B cell (primary cell): ENCODE measurements at regions of chr1 and their contacts with region 1.

Region 1: GRCh38 chr1:37989361-37989930 is 376 bp downstream of the SF3A3 start:
- DNase-seq: no peak
- ATAC-seq: no peak
- H3K4me3 ChIP-seq: peak overlapping the region; percentile 90 to 98 (median 96)
- H3K4me3 Mint-ChIP-seq: peak overlapping the region; percentile 99
- H3K27ac ChIP-seq: peak overlapping the region; percentile 53 to 85
- H3K27ac Mint-ChIP-seq: peak overlapping the region; percentile 98
- H3K4me1 ChIP-seq: peaks cover 7 to 15% of the 10 kb centered on the region in 2 donors
- H3K4me1 Mint-ChIP-seq: peaks cover 20% of the 10 kb centered on the region
- H3K27me3 ChIP-seq: no peaks in the 10 kb centered on the region
- H3K27me3 Mint-ChIP-seq: no peaks in the 10 kb centered on the region
- CTCF ChIP-seq: no peak

Region 2: GRCh38 chr1:37859507-37860345 is 129.7 kb before region 1 on chr1 and contains the start of gene MTF1:
- CTCF ChIA-PET with region 1: interaction called, 5 read pairs
- POLR2A ChIA-PET with region 1: no interaction called
- intact Hi-C with region 1: loop called (anchors 1 kb)
- DNase-seq: peak; percentile 98
- ATAC-seq: peak; percentile 98
- H3K4me3 ChIP-seq: peak within 1 kb of the TSS; percentile 72 to 100 (median 95)
- H3K4me3 Mint-ChIP-seq: peak within 1 kb of the TSS; percentile 97
- H3K27ac ChIP-seq: peak within 1 kb of the TSS; percentile 79 to 95
- H3K27ac Mint-ChIP-seq: peak within 1 kb of the TSS; percentile 94
- H3K4me1 ChIP-seq: peaks cover 16 to 18% of the 10 kb centered on the region in 2 donors
- H3K4me1 Mint-ChIP-seq: peaks cover 33% of the 10 kb centered on the region
- H3K27me3 ChIP-seq: no peaks in the 10 kb centered on the region
- H3K27me3 Mint-ChIP-seq: no peaks in the 10 kb centered on the region
- CTCF ChIP-seq: peak; percentile 94
- total RNA-seq, gene MTF1: 34.6 and 36.7 TPM in 2 replicates

Region 3: DNA sequence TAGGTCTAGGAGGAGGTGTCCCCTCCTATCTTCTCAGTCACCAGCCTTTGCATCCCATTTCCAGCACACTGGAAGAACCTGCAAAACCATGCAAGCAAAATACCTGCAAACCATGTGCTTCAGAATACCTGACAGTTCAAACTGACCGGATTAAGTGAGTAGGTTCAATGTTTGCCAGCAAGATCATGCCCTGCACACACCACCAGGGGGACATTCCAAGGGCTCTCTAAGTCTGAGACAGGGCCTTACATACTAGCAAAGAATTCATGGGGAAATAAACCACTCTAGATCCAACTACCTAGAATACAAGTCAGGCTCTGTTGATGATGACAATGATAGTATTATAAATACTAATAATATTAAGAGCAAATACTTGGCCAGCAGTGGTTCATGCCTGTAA is 70.2 kb before region 1 on chr1:
- CTCF ChIA-PET with region 1: interaction called, 5 read pairs
- POLR2A ChIA-PET with region 1: no interaction called
- intact Hi-C with region 1: loop called (anchors 2 kb)
- DNase-seq: peak; percentile 23
- ATAC-seq: no peak
- H3K4me3 ChIP-seq: no peak overlapping the region
- H3K4me3 Mint-ChIP-seq: no peak overlapping the region
- H3K27ac ChIP-seq: no peak overlapping the region
- H3K27ac Mint-ChIP-seq: no peak overlapping the region
- H3K4me1 ChIP-seq: peaks cover 55 to 56% of the 10 kb centered on the region in 2 donors
- H3K4me1 Mint-ChIP-seq: peaks cover 45% of the 10 kb centered on the region
- H3K27me3 ChIP-seq: no peaks in the 10 kb centered on the region
- H3K27me3 Mint-ChIP-seq: no peaks in the 10 kb centered on the region
- CTCF ChIP-seq: peak; percentile 53

Region 4: DNA sequence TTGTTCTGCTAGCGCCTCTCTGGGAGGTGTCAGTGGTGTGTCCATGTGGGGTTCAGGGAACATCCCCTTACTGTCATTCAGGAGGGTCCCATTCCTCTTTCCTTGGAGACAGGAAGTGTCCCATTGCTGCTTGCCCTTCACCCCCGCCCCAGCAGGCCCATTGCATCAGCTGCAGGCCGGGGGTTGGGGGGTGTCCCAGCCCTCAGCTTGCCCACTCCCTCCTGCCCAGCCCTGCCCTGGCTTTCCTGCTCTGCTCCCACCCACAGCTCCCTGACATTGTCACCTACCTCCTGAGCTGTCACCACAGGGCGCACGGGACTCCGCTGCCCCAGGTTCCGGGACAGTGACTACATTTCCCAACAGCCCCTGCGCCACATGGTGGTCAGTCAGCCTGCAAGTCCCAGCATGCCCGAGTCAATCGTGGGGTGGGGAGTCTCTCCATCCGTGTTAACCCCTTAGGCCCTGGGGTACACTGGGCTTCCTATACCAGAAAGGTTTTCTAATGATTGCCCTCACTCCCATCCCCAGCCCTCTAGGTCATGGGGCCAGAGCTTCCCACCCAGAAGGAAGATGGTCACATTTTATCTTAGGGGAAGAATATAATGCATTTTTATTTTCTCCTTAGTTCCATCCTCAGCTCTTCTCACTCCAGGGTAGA is 42.6 kb before region 1 on chr1 and contains the start of gene INPP5B:
- CTCF ChIA-PET with region 1: no interaction called
- POLR2A ChIA-PET with region 1: no interaction called
- intact Hi-C with region 1: loop called (anchors 1 kb)
- DNase-seq: peak; percentile 79
- ATAC-seq: peak; percentile 100
- H3K4me3 ChIP-seq: peak within 1 kb of the TSS; percentile 50 to 73 (median 67)
- H3K4me3 Mint-ChIP-seq: peak within 1 kb of the TSS; percentile 91
- H3K27ac ChIP-seq: peak within 1 kb of the TSS in 1 of 2 donors; percentile 56
- H3K27ac Mint-ChIP-seq: peak within 1 kb of the TSS; percentile 86
- H3K4me1 ChIP-seq: peaks cover 14 to 19% of the 10 kb centered on the region in 2 donors
- H3K4me1 Mint-ChIP-seq: peaks cover 14% of the 10 kb centered on the region
- H3K27me3 ChIP-seq: no peaks in the 10 kb centered on the region
- H3K27me3 Mint-ChIP-seq: no peaks in the 10 kb centered on the region
- CTCF ChIP-seq: no peak
- total RNA-seq, gene INPP5B: 63.3 and 66.9 TPM in 2 replicates

Region 5: DNA sequence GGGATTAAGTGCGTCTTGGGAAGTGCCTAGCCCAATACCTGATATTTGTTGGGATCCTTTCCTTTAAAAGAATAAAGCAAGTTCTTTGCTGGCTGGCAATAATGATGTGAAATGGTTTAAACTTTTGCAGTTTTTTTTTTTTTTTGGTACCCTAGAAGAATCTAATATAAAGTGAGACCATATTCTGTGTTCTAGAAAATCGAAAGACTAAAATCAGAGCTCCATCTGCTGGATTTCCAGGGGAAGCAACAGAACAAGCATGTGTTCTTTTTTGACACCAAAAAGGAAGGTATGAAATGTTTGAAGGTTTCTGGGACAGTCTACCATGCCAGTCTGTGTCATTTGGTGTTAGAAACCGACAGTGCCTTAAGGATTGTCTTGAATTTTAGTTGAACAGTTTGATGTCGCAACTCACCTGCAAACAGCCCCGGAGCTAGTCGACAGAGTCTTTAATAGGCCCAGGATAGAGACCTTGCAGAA is 29.5 kb after region 1 on chr1:
- CTCF ChIA-PET with region 1: interaction called, 26 read pairs
- POLR2A ChIA-PET with region 1: interaction called, 3 read pairs
- intact Hi-C with region 1: no loop called
- DNase-seq: no peak
- ATAC-seq: no peak
- H3K4me3 ChIP-seq: no peak overlapping the region
- H3K4me3 Mint-ChIP-seq: no peak overlapping the region
- H3K27ac ChIP-seq: no peak overlapping the region
- H3K27ac Mint-ChIP-seq: no peak overlapping the region
- H3K4me1 ChIP-seq: peaks cover 4% of the 10 kb centered on the region in 2 donors
- H3K4me1 Mint-ChIP-seq: peaks cover 8% of the 10 kb centered on the region
- H3K27me3 ChIP-seq: no peaks in the 10 kb centered on the region
- H3K27me3 Mint-ChIP-seq: no peaks in the 10 kb centered on the region
- CTCF ChIP-seq: peak; percentile 57

Region 6: DNA sequence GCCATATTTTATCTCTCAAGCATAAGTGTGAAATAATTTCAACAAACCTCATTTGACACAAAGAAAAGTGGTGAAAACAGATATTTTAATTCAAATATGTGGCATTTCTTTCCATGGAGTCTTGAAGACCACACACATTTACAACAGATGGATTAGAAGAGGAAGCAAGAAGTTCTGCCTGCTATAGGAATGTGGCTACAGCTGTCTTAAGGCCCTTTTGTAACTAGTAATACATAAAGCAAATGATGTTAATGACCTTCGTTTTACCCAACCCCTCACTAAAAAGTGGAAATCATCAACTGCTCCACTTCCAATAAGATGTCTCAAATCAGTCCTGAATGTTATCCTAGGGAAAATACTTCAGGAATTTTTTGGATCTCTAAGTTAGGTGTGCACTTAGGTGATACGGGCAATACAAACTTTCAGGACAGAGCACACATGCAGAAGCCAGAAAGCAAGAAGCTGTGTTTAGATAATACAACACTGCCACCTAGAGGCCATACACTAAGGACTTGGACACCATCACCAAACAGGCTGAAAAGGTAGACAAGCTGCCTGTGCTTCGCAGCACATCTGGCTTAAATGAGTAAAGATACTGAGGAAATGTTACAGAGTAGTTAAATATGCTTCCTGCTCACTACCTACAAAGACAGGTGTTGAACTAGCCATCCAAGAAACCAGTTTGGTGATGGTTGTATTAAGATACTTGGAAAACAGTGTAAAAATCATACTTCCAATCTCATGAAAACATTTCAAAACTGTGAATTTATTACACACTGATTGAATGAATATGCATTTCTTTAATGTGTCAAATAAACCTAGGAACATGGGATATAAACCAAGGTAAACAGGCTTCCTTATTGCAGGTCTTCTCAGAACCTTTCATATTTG is 845.7 kb after region 1 on chr1:
- CTCF ChIA-PET with region 1: interaction called, 6 read pairs
- POLR2A ChIA-PET with region 1: no interaction called
- intact Hi-C with region 1: loop called (anchors 1 kb)
- DNase-seq: peak; percentile 84
- ATAC-seq: peak; percentile 78
- H3K4me3 ChIP-seq: no peak overlapping the region
- H3K4me3 Mint-ChIP-seq: no peak overlapping the region
- H3K27ac ChIP-seq: no peak overlapping the region
- H3K27ac Mint-ChIP-seq: no peak overlapping the region
- H3K4me1 ChIP-seq: peaks cover 0 to under 1% of the 10 kb centered on the region in 2 donors
- H3K4me1 Mint-ChIP-seq: peaks cover 3% of the 10 kb centered on the region
- H3K27me3 ChIP-seq: peaks cover 0 to 8% (median 2%) of the 10 kb centered on the region in 4 experiments
- H3K27me3 Mint-ChIP-seq: peaks cover 6% of the 10 kb centered on the region
- CTCF ChIP-seq: peak; percentile 88